Esophagus muscularis mucosa (tissue), 4 donors: ENCODE measurements at regions of chr10 and their contacts with region 1.

Region 1: DNA sequence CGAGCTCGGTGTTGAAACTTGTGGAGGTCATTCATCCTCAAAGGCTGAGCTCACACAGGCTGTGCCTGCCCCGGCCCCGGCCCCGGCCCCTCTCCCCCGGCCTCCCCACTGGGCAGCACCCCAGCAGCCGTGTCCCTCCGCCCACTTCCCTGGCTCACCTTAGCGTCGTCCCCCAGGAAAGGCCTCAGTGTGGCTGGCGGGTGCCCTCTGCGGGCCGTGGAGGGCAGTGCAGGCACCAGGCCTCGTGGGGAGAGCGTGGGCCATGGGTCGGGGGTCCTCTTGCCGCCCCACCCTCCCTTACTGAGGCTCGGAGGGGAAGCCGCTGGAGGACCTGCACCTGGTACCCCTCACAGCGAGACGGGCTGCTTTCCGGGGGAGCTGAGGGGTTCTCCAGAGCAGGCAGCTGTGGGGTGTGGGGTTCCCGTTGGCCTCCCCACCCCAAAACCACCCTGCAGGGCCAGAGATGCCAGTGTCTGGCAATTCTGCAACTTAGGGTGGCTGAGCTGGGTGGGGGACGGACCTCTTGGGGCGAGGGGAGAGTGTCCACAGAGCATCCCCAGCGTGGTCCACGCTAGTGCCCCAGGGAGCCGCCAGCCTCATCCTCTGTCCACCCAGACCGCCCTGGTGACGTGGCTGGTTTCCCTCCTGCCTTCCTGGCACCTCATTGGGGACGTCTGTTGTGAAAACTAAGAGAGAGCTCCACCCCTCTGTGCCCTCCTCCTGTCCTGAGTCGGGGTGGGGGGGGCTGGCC is 44.2 kb upstream of the DPYSL4 start:
- DNase-seq: no peak
- H3K4me3 ChIP-seq: no peak overlapping the region
- H3K27ac ChIP-seq: no peak overlapping the region
- H3K4me1 ChIP-seq: peaks cover 4 to 14% (median 9%) of the 10 kb centered on the region in 4 donors
- H3K27me3 ChIP-seq: peaks cover 0 to 19% (median 0%) of the 10 kb centered on the region in 4 donors
- CTCF ChIP-seq: peak in 2 of 3 experiments; percentile 73 to 80
- EP300 ChIP-seq: no peak
- POLR2A ChIP-seq: no peak

Region 2: GRCh38 chr10:131689016-131689415 is 453.6 kb before region 1 on chr10:
- intact Hi-C with region 1: no loop called
- DNase-seq: no peak
- H3K4me3 ChIP-seq: no peak overlapping the region
- H3K27ac ChIP-seq: no peak overlapping the region
- H3K4me1 ChIP-seq: no peaks in the 10 kb centered on the region
- H3K27me3 ChIP-seq: peaks cover 0 to 40% (median 0%) of the 10 kb centered on the region in 4 donors
- CTCF ChIP-seq: no peak
- EP300 ChIP-seq: no peak
- POLR2A ChIP-seq: no peak

Region 3: DNA sequence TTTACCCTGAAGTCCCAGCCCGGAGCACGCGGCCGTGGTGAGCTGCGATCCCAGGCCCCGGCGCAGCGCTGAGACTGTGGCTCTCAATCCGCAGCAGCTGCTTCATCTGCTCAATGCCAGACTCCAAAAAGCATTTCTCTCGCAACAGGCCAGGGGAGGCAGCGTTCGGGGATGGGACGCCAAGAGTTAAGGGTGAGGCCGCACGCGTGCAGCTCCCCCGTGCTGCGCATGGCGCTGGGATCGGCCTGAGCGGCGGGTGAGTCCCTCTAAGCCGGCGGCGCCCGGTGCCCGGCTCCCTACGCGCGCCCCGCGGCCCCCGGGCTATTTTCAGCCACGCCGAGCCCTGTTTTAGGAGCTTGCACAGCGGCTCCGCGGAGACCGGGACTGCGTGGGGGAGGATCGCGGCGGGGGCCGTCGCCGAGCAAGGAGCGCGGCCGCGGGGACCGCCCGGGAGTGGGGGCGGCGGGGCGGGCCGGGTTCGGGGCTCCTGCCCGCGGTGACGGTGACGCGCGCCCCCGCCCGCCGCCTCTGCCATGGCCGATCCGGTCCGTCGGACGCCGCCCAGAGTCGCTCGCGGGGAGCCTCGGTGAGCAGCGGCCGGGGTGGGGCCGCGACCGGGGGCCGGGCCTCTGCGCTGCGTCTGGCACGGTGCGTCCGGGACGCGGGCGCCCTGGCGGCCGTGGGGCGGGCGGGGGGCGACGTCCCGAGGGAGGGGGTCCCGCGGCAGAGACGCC is 106.3 kb before region 1 on chr10:
- intact Hi-C with region 1: loop called (anchors 5 kb)
- DNase-seq: no peak
- H3K4me3 ChIP-seq: peak overlapping the region; percentile 58 to 65 (median 62)
- H3K27ac ChIP-seq: peak overlapping the region; percentile 20 to 70 (median 48)
- H3K4me1 ChIP-seq: peaks cover 7 to 25% (median 21%) of the 10 kb centered on the region in 4 donors
- H3K27me3 ChIP-seq: peaks cover 0 to 58% (median 0%) of the 10 kb centered on the region in 4 donors
- CTCF ChIP-seq: no peak
- EP300 ChIP-seq: no peak
- POLR2A ChIP-seq: no peak